ENCODE measurements at regions of chr7 and their contacts with region 1.

Region 1: DNA sequence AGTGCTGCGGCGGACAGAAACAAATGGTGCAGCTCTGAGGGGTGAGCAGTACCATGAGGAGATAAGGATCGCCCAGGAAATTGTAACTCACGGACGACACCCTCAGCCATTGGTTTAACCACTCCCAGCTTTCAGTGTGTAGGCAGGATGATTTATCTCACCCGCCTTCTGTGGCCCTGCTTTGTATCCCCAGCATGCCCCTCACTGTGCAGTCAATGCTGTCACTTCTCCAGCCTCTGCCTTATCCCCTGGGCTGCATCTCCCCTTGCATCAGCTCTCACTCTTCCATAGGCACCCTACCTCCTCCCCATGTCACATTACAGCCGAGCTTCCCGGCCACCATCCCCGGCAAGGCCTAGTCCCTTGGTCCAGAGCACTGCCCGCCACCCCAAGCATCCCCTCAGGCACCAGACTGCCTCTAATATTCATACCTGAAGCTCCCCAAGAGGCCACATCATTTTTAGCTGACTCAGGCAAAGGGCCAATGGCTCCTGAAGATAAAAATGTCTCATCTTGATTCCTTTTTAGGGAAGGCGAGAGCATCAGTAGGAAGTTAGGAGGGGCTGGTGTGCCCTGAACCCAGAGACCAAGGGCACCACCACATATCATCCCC is 77.1 kb downstream of the CARD11 start:
- DNase-seq: no peak
- ATAC-seq: no peak
- H3K4me3 ChIP-seq: no peak overlapping the region
- H3K27ac ChIP-seq: no peak overlapping the region
- H3K4me1 ChIP-seq: no peaks in the 10 kb centered on the region
- H3K27me3 ChIP-seq: no peaks in the 10 kb centered on the region
- CTCF ChIP-seq: no peak
- POLR2A ChIP-seq: no peak

Region 2: DNA sequence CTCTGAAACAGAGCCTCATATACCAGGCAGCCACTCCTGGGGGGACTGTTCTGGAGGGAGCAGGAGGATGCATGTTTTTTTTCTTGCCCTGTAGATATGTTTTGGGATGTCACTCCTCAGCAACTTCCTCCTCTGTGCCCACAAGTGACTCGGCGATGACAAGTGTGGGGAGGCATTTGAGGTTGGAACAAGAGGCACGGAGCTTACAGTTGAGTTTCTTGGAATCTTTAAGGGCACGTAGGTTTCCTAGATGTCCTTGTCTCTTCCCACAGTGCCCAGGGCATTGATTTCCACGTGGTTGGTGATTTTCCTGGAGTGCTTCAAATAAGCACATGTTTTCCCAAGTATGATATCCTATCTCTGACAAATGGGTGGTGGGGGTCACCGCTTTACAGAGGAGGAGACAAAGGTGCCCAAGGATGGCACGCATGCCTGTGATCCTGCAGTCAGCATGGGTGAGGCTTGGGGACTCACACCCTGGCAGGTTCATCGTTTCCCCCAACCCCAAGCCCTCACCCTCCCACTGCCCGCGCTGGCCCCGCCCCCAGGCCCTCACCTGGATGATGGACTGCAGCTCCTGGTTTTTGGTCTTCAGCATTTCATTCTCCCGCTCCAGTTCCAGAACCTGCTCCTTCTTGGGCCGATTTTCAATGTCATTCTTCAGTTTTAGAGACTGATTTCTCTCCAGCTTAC is 27.2 kb before region 1 on chr7:
- in situ Hi-C with region 1: no loop called
- intact Hi-C with region 1: loop called (anchors 1 kb)
- DNase-seq: no peak
- ATAC-seq: no peak
- H3K4me3 ChIP-seq: no peak overlapping the region
- H3K27ac ChIP-seq: no peak overlapping the region
- H3K4me1 ChIP-seq: no peaks in the 10 kb centered on the region
- H3K27me3 ChIP-seq: peaks cover 0 to 29% (median 5%) of the 10 kb centered on the region in 3 donors
- CTCF ChIP-seq: no peak
- POLR2A ChIP-seq: no peak

Measured in gastrocnemius medialis (tissue), 4 donors.